ENCODE measurements at regions of chr12 and their contacts with region 1.

Region 1: DNA sequence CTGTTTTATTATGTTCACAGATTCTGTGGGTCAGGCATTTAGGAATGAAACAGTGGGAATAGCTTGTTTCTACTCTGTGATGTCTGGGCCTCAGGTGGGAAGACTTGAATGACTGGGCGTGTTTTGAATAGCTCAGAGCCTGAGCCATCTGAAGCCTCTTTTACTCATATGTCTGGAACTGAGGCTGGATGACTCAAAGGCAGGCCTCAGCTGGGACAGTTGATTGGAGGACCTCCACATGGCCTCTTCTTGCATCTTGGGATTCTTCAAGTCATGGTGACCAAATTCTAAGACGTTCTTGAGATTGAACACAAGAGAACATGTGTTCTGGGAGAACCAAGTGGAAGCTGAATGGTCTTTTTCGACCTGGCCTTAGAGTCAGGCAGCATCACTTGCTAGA is 45.8 kb upstream of the TBX3 start:
- DNase-seq: no peak
- H3K4me3 ChIP-seq: no peak overlapping the region
- H3K27ac ChIP-seq: no peak overlapping the region
- H3K4me1 ChIP-seq: no peaks in the 10 kb centered on the region
- H3K27me3 ChIP-seq: no peaks in the 10 kb centered on the region
- CTCF ChIP-seq: no peak
- POLR2A ChIP-seq: no peak

Region 2: GRCh38 chr12:114491916-114492315 is 237.8 kb before region 1 on chr12:
- intact Hi-C with region 1: no loop called
- DNase-seq: no peak
- H3K4me3 ChIP-seq: no peak overlapping the region
- H3K27ac ChIP-seq: no peak overlapping the region
- H3K4me1 ChIP-seq: no peaks in the 10 kb centered on the region
- H3K27me3 ChIP-seq: no peaks in the 10 kb centered on the region
- CTCF ChIP-seq: no peak
- POLR2A ChIP-seq: no peak

Region 3: GRCh38 chr12:114684870-114685781 is 44.6 kb before region 1 on chr12:
- intact Hi-C with region 1: loop called (anchors 1 kb)
- DNase-seq: no peak
- H3K4me3 ChIP-seq: peak overlapping the region; percentile 82 to 90
- H3K27ac ChIP-seq: peak overlapping the region; percentile 99
- H3K4me1 ChIP-seq: peaks cover 12% of the 10 kb centered on the region
- H3K27me3 ChIP-seq: no peaks in the 10 kb centered on the region
- CTCF ChIP-seq: no peak
- POLR2A ChIP-seq: no peak